Aorta (tissue), 5 donors: ENCODE measurements at regions of chr10 and their contacts with region 1.

Region 1: GRCh38 chr10:42782446-42783180 is at the start of gene BMS1:
- DNase-seq: peak; percentile 93
- ATAC-seq: peak; percentile 97
- H3K4me3 ChIP-seq: peak within 1 kb of the TSS; percentile 49 to 69
- H3K27ac ChIP-seq: peak within 1 kb of the TSS; percentile 9 to 79
- H3K4me1 ChIP-seq: no peaks in the 10 kb centered on the region
- H3K27me3 ChIP-seq: no peaks in the 10 kb centered on the region
- total RNA-seq, gene BMS1: 12.8 to 13.4 TPM

Region 2: GRCh38 chr10:42574336-42574735 is 208.3 kb before region 1 on chr10:
- intact Hi-C with region 1: no loop called
- DNase-seq: no peak
- ATAC-seq: no peak
- H3K4me3 ChIP-seq: no peak overlapping the region
- H3K27ac ChIP-seq: no peak overlapping the region
- H3K4me1 ChIP-seq: no peaks in the 10 kb centered on the region
- H3K27me3 ChIP-seq: no peaks in the 10 kb centered on the region

Region 3: DNA sequence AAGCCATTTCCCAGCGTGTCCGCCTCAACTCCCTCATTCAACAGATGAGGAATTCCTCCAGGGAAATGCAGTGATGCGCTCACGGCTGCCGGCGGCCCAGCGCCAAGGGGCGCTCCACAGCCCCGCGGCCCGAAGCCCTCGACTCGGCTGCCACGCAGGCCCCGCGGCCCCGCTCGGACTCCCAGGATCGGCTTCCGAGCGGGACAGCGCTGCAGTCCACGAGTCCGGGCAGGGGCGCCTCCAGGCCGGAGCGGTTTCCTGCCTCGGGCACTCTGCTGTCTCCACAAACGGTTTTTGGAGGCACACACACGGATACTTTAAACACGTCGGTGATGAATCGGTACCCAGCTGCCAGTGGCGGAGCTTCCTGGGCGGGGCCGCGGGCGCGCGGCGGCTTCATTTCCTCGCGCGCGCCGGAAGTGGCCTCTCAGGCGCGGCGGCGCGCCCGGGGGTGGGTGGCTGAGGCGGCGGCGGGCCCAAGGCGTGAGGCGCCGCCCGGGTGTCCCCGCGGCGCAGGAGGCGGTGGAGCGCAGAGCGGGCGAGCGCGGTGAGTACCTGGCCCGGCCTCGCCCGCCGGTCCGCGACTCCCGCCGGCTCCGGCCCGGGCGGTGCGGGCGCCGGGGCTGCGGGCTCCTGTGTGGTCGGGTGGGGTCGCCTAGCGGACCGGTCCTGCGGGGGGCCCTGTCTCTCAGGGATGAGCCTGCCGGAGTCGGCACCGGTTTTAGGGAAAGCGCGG is 355.6 kb after region 1 on chr10 and contains the start of gene CSGALNACT2:
- intact Hi-C with region 1: loop called in 1 of 2 experiments (anchors 10 kb)
- DNase-seq: peak; percentile 91 to 96
- ATAC-seq: peak; percentile 93
- H3K4me3 ChIP-seq: peak within 1 kb of the TSS; percentile 89 to 96
- H3K27ac ChIP-seq: peak within 1 kb of the TSS; percentile 88 to 89
- H3K4me1 ChIP-seq: no peaks in the 10 kb centered on the region
- H3K27me3 ChIP-seq: no peaks in the 10 kb centered on the region
- total RNA-seq, gene CSGALNACT2: 32.7 to 35.8 TPM

Region 4: GRCh38 chr10:43471935-43472720 is 689.5 kb after region 1 on chr10:
- intact Hi-C with region 1: no loop called
- DNase-seq: no peak
- ATAC-seq: no peak
- H3K4me3 ChIP-seq: no peak overlapping the region
- H3K27ac ChIP-seq: no peak overlapping the region
- H3K4me1 ChIP-seq: no peaks in the 10 kb centered on the region
- H3K27me3 ChIP-seq: no peaks in the 10 kb centered on the region